ENCODE measurements at regions of chr2 and their contacts with region 1.

Region 1: GRCh38 chr2:176121190-176122051 is 1.1 kb upstream of the HOXD9 start:
- DNase-seq: no peak
- H3K4me3 Mint-ChIP-seq: no peak overlapping the region
- H3K27ac Mint-ChIP-seq: no peak overlapping the region
- H3K4me1 Mint-ChIP-seq: peaks cover 13% of the 10 kb centered on the region
- H3K27me3 Mint-ChIP-seq: peaks cover 79% of the 10 kb centered on the region

Region 2: GRCh38 chr2:175676813-175677212 is 444.6 kb before region 1 on chr2:
- CTCF ChIA-PET with region 1: no interaction called
- intact Hi-C with region 1: no loop called
- DNase-seq: no peak
- H3K4me3 Mint-ChIP-seq: no peak overlapping the region
- H3K27ac Mint-ChIP-seq: no peak overlapping the region
- H3K4me1 Mint-ChIP-seq: no peaks in the 10 kb centered on the region
- H3K27me3 Mint-ChIP-seq: peaks cover 15% of the 10 kb centered on the region

Region 3: DNA sequence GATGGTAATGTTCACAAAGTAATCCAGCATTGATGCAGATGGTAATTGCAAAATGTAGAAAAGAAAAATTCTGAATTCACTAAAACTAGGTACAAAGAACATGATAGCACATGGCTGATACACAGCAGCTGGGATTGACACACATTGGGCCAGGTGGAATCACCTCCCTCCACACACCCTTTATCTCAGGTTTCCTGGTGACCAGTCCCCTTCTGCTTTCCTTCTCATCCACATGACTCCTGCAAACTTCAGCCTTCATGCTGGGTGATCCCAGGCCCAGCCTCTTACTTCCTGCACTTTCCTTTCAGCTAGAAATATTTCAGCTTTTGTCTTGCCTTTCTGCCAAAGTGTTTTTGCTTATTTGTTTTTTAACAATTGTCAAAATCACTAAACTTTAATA is 366.3 kb before region 1 on chr2:
- CTCF ChIA-PET with region 1: no interaction called
- intact Hi-C with region 1: no loop called
- DNase-seq: no peak
- H3K4me3 Mint-ChIP-seq: no peak overlapping the region
- H3K27ac Mint-ChIP-seq: no peak overlapping the region
- H3K4me1 Mint-ChIP-seq: no peaks in the 10 kb centered on the region
- H3K27me3 Mint-ChIP-seq: peaks cover 8% of the 10 kb centered on the region

Region 4: GRCh38 chr2:176110975-176111663 is 10.3 kb before region 1 on chr2:
- CTCF ChIA-PET with region 1: interaction called, 9 read pairs
- intact Hi-C with region 1: loop called (anchors 2 kb)
- DNase-seq: no peak
- H3K4me3 Mint-ChIP-seq: no peak overlapping the region
- H3K27ac Mint-ChIP-seq: no peak overlapping the region
- H3K4me1 Mint-ChIP-seq: peaks cover 17% of the 10 kb centered on the region
- H3K27me3 Mint-ChIP-seq: peaks cover 80% of the 10 kb centered on the region